ENCODE measurements at regions of chr5 and their contacts with region 1.

Region 1: DNA sequence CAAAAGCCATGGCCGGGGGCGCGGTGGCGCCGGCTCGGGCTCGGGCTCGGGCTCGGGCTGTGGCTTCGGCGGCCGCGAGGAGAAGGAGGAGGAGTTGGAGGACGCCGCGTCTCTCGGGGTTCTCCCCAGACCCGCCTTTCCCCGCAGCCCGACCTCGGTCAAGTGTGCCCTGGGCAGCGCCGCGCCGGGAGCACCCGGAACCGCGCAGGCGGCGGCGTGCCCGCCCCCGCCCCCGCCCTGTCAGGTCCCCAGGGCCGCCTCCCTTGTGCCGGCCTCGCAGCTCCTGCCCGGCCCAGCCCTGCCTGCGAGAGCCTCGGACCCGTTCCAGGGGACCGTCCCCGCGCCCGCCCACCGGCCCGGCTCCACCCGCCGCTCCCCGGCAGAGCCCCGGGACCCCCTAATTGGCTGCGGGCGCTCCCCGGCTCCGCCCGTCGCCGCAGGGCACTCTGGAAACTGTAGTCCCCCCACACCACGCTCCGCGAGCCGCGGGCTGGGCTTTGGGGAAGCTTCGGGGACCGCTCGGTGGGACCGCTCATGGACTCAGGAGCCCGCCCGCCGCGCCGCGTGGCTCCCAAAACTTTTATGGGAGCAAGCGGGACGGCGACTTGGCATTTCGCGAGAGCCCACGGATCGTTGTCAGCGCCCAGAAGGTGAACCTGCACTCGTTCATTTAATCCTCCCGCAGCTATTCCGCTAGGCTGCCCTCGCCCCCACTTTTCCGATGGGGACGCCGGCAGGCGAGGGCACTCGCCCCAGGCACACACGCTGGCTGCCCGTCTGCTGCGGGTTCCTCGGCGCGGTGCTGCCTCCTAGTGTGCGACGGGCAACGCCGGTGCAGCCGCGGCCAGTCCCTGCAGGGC is at the start of gene STK10:
- DNase-seq: peak; percentile 82 to 92 (median 90)
- ATAC-seq: peak; percentile 86
- H3K4me3 ChIP-seq: peak within 1 kb of the TSS; percentile 89
- H3K4me3 Mint-ChIP-seq: peak within 1 kb of the TSS; percentile 96 to 100 (median 99)
- H3K27ac ChIP-seq: peak within 1 kb of the TSS; percentile 94
- H3K27ac Mint-ChIP-seq: peak within 1 kb of the TSS; percentile 91 to 100 (median 97)
- H3K4me1 ChIP-seq: peaks cover 12 to 15% of the 10 kb centered on the region in 2 donors
- H3K4me1 Mint-ChIP-seq: peaks cover 11 to 35% (median 25%) of the 10 kb centered on the region in 7 donors
- H3K27me3 ChIP-seq: no peaks in the 10 kb centered on the region
- H3K27me3 Mint-ChIP-seq: peaks cover 0 to 11% (median 0%) of the 10 kb centered on the region in 5 donors
- total RNA-seq, gene STK10: 244 to 474 (median 311) TPM

Region 2: GRCh38 chr5:171907725-171908343 is 280.4 kb before region 1 on chr5:
- CTCF ChIA-PET with region 1: interaction called, 11 read pairs
- POLR2A ChIA-PET with region 1: no interaction called
- intact Hi-C with region 1: loop called (anchors 1 to 2 kb)
- DNase-seq: peak in 7 of 9 donors; percentile 9 to 55 (median 45)
- ATAC-seq: peak; percentile 88
- H3K4me3 ChIP-seq: no peak overlapping the region
- H3K4me3 Mint-ChIP-seq: no peak overlapping the region
- H3K27ac ChIP-seq: no peak overlapping the region
- H3K27ac Mint-ChIP-seq: peak overlapping the region in 3 of 9 donors; percentile 0 to 75 (median 50)
- H3K4me1 ChIP-seq: peaks cover 0 to 23% of the 10 kb centered on the region in 2 donors
- H3K4me1 Mint-ChIP-seq: peaks cover 25 to 54% (median 48%) of the 10 kb centered on the region in 7 donors
- H3K27me3 ChIP-seq: no peaks in the 10 kb centered on the region
- H3K27me3 Mint-ChIP-seq: no peaks in the 10 kb centered on the region

Region 3: GRCh38 chr5:172035039-172035438 is 153.2 kb before region 1 on chr5:
- CTCF ChIA-PET with region 1: no interaction called
- POLR2A ChIA-PET with region 1: no interaction called
- intact Hi-C with region 1: no loop called
- DNase-seq: no peak
- ATAC-seq: peak; percentile 27
- H3K4me3 ChIP-seq: no peak overlapping the region
- H3K4me3 Mint-ChIP-seq: peak overlapping the region in 1 of 10 donors; percentile 20
- H3K27ac ChIP-seq: no peak overlapping the region
- H3K27ac Mint-ChIP-seq: no peak overlapping the region
- H3K4me1 ChIP-seq: no peaks in the 10 kb centered on the region
- H3K4me1 Mint-ChIP-seq: peaks cover 0 to 16% (median 9%) of the 10 kb centered on the region in 7 donors
- H3K27me3 ChIP-seq: no peaks in the 10 kb centered on the region
- H3K27me3 Mint-ChIP-seq: no peaks in the 10 kb centered on the region

Region 4: GRCh38 chr5:172065501-172065990 is 122.7 kb before region 1 on chr5:
- CTCF ChIA-PET with region 1: interaction called, 4 read pairs
- POLR2A ChIA-PET with region 1: interaction called, 35 read pairs
- intact Hi-C with region 1: loop called (anchors 1 kb)
- DNase-seq: no peak
- ATAC-seq: no peak
- H3K4me3 ChIP-seq: no peak overlapping the region
- H3K4me3 Mint-ChIP-seq: peak overlapping the region; percentile 7 to 86 (median 78)
- H3K27ac ChIP-seq: peak overlapping the region; percentile 82
- H3K27ac Mint-ChIP-seq: peak overlapping the region; percentile 87 to 99 (median 96)
- H3K4me1 ChIP-seq: peaks cover 36 to 48% of the 10 kb centered on the region in 2 donors
- H3K4me1 Mint-ChIP-seq: peaks cover 53 to 85% (median 75%) of the 10 kb centered on the region in 7 donors
- H3K27me3 ChIP-seq: no peaks in the 10 kb centered on the region
- H3K27me3 Mint-ChIP-seq: no peaks in the 10 kb centered on the region

Region 5: GRCh38 chr5:172133359-172134029 is 54.8 kb before region 1 on chr5:
- CTCF ChIA-PET with region 1: interaction called, 15 read pairs
- POLR2A ChIA-PET with region 1: interaction called, 3 read pairs
- intact Hi-C with region 1: loop called in 1 of 2 experiments (anchors 2 kb)
- DNase-seq: peak in 3 of 9 donors; percentile 11 to 32 (median 15)
- ATAC-seq: peak; percentile 87
- H3K4me3 ChIP-seq: no peak overlapping the region
- H3K4me3 Mint-ChIP-seq: peak overlapping the region; percentile 20 to 78 (median 65)
- H3K27ac ChIP-seq: peak overlapping the region; percentile 56
- H3K27ac Mint-ChIP-seq: peak overlapping the region; percentile 67 to 94 (median 85)
- H3K4me1 ChIP-seq: peaks cover 17 to 53% of the 10 kb centered on the region in 2 donors
- H3K4me1 Mint-ChIP-seq: peaks cover 49 to 81% (median 77%) of the 10 kb centered on the region in 7 donors
- H3K27me3 ChIP-seq: no peaks in the 10 kb centered on the region
- H3K27me3 Mint-ChIP-seq: no peaks in the 10 kb centered on the region

Region 6: GRCh38 chr5:172283020-172283861 is 95.0 kb after region 1 on chr5 and contains the start of gene UBTD2:
- CTCF ChIA-PET with region 1: interaction called, 3 read pairs
- POLR2A ChIA-PET with region 1: interaction called, 3 read pairs
- intact Hi-C with region 1: loop called (anchors 1 kb)
- DNase-seq: peak in 7 of 9 donors; percentile 51 to 84 (median 67)
- ATAC-seq: peak; percentile 89
- H3K4me3 ChIP-seq: peak within 1 kb of the TSS; percentile 73
- H3K4me3 Mint-ChIP-seq: peak within 1 kb of the TSS; percentile 85 to 94 (median 90)
- H3K27ac ChIP-seq: peak within 1 kb of the TSS; percentile 61
- H3K27ac Mint-ChIP-seq: peak within 1 kb of the TSS; percentile 67 to 94 (median 75)
- H3K4me1 ChIP-seq: peaks cover 11 to 13% of the 10 kb centered on the region in 2 donors
- H3K4me1 Mint-ChIP-seq: peaks cover 10 to 34% (median 29%) of the 10 kb centered on the region in 7 donors
- H3K27me3 ChIP-seq: no peaks in the 10 kb centered on the region
- H3K27me3 Mint-ChIP-seq: peaks cover 0 to 24% (median 0%) of the 10 kb centered on the region in 5 donors
- total RNA-seq, gene UBTD2: 2.3 to 8.3 (median 5.9) TPM

Region 7: DNA sequence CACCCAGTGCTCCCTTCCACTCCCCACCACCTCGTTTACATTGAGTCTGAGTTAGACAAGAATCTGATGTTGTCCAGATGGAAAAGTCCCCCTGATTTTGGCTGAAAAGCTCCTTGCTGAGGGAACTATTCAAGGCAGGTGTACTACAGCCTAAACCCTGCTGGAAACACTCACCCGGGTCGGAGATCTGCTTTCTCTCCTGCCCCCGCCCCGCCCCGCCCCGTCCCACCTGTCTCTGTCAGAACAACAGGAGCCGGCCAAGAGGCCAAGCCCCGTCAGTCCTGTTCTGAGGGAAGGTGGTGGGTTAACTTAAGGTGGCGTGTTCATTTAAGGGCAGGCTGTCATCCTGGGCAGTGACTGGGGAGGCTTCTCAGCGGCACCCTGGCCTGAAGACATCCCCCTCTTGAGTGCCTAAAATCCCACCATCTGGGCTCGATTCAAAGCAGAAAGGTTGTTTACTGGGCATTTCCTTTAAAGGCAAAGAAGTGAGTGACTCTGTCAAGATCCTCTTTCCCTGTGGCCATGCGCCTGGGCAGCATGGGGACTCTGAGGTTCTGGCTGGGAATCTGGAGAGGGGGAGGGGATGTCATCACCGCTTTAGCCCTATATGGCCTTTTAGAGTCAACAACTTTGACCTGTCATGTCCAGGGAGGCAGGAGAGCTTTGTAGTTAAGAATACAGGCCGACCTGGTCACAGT is 381.7 kb after region 1 on chr5:
- CTCF ChIA-PET with region 1: no interaction called
- POLR2A ChIA-PET with region 1: no interaction called
- intact Hi-C with region 1: no loop called
- DNase-seq: no peak
- ATAC-seq: no peak
- H3K4me3 ChIP-seq: no peak overlapping the region
- H3K4me3 Mint-ChIP-seq: no peak overlapping the region
- H3K27ac ChIP-seq: no peak overlapping the region
- H3K27ac Mint-ChIP-seq: no peak overlapping the region
- H3K4me1 ChIP-seq: no peaks in the 10 kb centered on the region
- H3K4me1 Mint-ChIP-seq: no peaks in the 10 kb centered on the region
- H3K27me3 ChIP-seq: no peaks in the 10 kb centered on the region
- H3K27me3 Mint-ChIP-seq: peaks cover 0 to 30% (median 0%) of the 10 kb centered on the region in 5 donors

Region 8: GRCh38 chr5:172764849-172765765 is 576.8 kb after region 1 on chr5:
- CTCF ChIA-PET with region 1: interaction called, 3 read pairs
- POLR2A ChIA-PET with region 1: no interaction called
- intact Hi-C with region 1: loop called in 1 of 2 experiments (anchors 2 kb)
- DNase-seq: peak; percentile 86 to 100 (median 99)
- ATAC-seq: peak; percentile 73
- H3K4me3 ChIP-seq: peak overlapping the region; percentile 64
- H3K4me3 Mint-ChIP-seq: peak overlapping the region; percentile 80 to 93 (median 84)
- H3K27ac ChIP-seq: peak overlapping the region; percentile 93
- H3K27ac Mint-ChIP-seq: peak overlapping the region; percentile 94 to 100 (median 97)
- H3K4me1 ChIP-seq: peaks cover 25 to 31% of the 10 kb centered on the region in 2 donors
- H3K4me1 Mint-ChIP-seq: peaks cover 8 to 62% (median 52%) of the 10 kb centered on the region in 7 donors
- H3K27me3 ChIP-seq: no peaks in the 10 kb centered on the region
- H3K27me3 Mint-ChIP-seq: peaks cover 0 to 8% (median 0%) of the 10 kb centered on the region in 5 donors

Region 9: GRCh38 chr5:173887610-173888472 is 1699.6 kb after region 1 on chr5 and contains the start of gene CPEB4:
- CTCF ChIA-PET with region 1: no interaction called
- POLR2A ChIA-PET with region 1: no interaction called
- intact Hi-C with region 1: loop called in 1 of 2 experiments (anchors 5 kb)
- DNase-seq: peak; percentile 89 to 98 (median 97)
- ATAC-seq: peak; percentile 97
- H3K4me3 ChIP-seq: peak within 1 kb of the TSS; percentile 70
- H3K4me3 Mint-ChIP-seq: peak within 1 kb of the TSS; percentile 91 to 99 (median 96)
- H3K27ac ChIP-seq: peak within 1 kb of the TSS; percentile 82
- H3K27ac Mint-ChIP-seq: peak within 1 kb of the TSS; percentile 94 to 100 (median 98)
- H3K4me1 ChIP-seq: peaks cover 49 to 60% of the 10 kb centered on the region in 2 donors
- H3K4me1 Mint-ChIP-seq: peaks cover 61 to 88% (median 78%) of the 10 kb centered on the region in 7 donors
- H3K27me3 ChIP-seq: no peaks in the 10 kb centered on the region
- H3K27me3 Mint-ChIP-seq: no peaks in the 10 kb centered on the region
- total RNA-seq, gene CPEB4: 12.6 to 40.4 (median 17.5) TPM

Measured in naive thymus-derived CD4-positive, alpha-beta T cell (primary cell).